ENCODE measurements at regions of chr3 and their contacts with region 1.

Region 1: DNA sequence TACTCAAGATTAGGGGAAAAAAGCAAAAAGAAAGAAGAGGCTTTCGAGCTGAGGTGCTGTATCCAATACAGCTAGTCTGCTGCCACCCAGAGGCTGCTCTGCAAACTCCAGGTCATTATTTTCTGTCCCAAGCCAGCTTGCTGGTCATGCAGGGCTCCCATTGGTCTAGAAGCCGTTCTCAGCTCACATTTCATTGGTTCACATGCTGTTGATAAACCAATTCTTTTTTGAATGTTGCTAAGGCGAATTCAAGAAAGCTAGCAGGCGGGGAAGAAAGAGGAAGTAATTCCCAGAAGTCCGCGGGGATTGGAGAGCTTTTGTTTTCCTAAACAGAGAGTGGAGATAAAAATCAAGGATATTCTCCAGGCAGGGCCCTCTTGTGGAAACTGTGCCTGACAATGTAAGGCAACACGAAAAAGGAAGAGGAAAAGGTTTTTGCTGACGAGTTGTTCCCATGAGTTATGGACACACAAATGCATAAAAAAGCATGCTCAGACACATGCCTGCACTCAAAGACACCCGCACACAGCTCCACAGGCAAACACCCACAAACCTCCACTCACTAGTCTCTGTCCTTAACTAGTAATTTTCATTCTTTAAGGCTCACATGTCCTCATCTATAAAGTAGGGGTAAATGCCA is 33.4 kb downstream of the FSTL1 start:
- DNase-seq: peak; percentile 97
- H3K27ac ChIP-seq: peak overlapping the region; percentile 57
- CTCF ChIP-seq: peak; percentile 89

Region 2: GRCh38 chr3:119508172-119508845 is 909.1 kb before region 1 on chr3:
- CTCF ChIA-PET with region 1: no interaction called
- POLR2A ChIA-PET with region 1: no interaction called
- DNase-seq: no peak
- H3K27ac ChIP-seq: no peak overlapping the region
- CTCF ChIP-seq: no peak

Region 3: DNA sequence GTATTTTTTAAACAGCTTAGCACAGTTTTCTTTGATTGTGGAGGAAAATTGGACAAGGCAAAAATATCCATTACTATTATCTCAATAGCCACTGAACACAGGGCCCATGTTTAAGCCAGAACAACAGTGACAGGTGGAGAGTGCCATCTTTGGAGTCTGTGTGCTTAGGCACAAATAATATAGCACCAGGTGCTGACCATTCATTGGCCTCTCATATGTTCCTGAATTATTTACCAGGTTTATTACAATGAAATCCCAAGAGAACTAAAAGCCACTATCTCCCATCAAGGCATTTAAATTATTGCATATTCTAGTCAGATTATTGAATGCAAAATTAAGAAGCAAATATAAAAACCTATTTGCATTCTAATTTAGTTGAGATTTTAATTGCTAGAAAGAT is 172.0 kb before region 1 on chr3:
- CTCF ChIA-PET with region 1: interaction called, 25 read pairs
- POLR2A ChIA-PET with region 1: interaction called, 3 read pairs
- DNase-seq: no peak
- H3K27ac ChIP-seq: no peak overlapping the region
- CTCF ChIP-seq: no peak

Measured in RWPE1 (cell line).